Prostate gland (tissue), 2 donors: ENCODE measurements at regions of chr14 and their contacts with region 1.

Region 1: DNA sequence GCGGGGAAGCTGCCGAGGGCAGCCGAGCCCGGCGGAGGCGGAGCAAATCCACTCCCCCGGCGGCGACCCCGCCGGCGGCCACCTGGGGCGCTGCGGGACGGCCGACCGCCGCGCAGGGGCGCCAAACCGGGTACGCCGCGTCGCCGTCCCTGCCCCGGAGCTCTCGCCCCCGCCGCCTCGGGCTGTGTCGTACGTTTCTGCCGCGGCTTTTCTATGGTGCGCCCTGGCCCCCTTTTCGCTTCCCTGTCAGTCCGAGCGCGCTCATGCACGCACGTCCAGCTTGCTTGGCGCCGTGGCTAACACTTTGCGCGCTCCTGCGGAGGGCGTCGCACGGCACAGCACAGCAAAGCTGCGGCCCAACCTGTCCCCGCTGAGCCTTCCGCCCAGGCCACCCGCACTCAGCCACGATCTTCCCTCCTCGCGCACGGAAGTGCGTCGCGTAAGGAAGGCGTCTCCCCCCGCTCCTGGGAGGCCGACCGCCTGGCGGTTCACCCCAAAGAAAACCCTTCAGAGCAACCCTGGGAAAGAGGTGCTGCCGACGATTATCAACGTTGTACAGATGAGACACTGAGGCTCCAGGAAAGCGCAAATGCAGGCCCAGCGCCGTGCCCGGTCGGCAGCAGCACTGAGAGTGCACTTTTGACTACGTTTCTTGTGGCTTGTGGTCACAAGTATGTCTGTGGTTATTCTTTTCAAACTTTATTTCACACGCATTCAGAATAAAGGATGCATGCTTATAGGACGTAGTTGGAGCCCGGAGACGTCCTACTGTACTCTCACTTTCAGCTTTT is at the start of gene HECTD1:
- DNase-seq: peak; percentile 89
- H3K4me3 ChIP-seq: peak within 1 kb of the TSS; percentile 71 to 87
- H3K27ac ChIP-seq: peak within 1 kb of the TSS; percentile 98 to 99
- H3K4me1 ChIP-seq: no peaks in the 10 kb centered on the region
- H3K27me3 ChIP-seq: no peaks in the 10 kb centered on the region
- CTCF ChIP-seq: peak; percentile 65 to 90 (median 79)
- POLR2A ChIP-seq: peak; percentile 45
- total RNA-seq, gene HECTD1: 108 to 189 TPM

Region 2: GRCh38 chr14:31026395-31027118 is 181.4 kb before region 1 on chr14:
- intact Hi-C with region 1: loop called (anchors 2 kb)
- DNase-seq: peak; percentile 97
- H3K4me3 ChIP-seq: peak overlapping the region; percentile 99 to 100
- H3K27ac ChIP-seq: peak overlapping the region; percentile 99
- H3K4me1 ChIP-seq: no peaks in the 10 kb centered on the region
- H3K27me3 ChIP-seq: no peaks in the 10 kb centered on the region
- CTCF ChIP-seq: peak in 2 of 4 experiments; percentile 31 to 39
- POLR2A ChIP-seq: peak; percentile 70

Region 3: DNA sequence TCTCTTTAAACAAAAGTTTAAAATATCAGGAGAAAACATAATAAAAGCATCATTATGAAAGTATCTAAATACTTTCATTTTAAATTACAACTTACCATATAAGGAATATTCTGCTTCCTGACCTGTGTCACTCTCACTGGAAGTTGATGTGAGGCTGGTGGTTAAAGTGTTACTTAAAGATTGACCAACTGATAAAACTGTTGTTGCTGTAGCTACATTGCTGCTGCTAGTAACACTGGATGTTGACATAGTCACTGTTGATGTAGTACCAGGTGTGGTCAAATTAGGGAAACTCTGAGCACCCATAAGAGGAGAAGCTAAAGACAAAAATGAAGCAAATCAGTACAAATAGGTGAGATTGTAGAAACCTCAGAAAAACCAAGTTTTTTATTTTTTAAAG is 80.3 kb before region 1 on chr14:
- intact Hi-C with region 1: no loop called
- DNase-seq: no peak
- H3K4me3 ChIP-seq: no peak overlapping the region
- H3K27ac ChIP-seq: no peak overlapping the region
- H3K4me1 ChIP-seq: no peaks in the 10 kb centered on the region
- H3K27me3 ChIP-seq: no peaks in the 10 kb centered on the region
- CTCF ChIP-seq: no peak
- POLR2A ChIP-seq: no peak

Region 4: DNA sequence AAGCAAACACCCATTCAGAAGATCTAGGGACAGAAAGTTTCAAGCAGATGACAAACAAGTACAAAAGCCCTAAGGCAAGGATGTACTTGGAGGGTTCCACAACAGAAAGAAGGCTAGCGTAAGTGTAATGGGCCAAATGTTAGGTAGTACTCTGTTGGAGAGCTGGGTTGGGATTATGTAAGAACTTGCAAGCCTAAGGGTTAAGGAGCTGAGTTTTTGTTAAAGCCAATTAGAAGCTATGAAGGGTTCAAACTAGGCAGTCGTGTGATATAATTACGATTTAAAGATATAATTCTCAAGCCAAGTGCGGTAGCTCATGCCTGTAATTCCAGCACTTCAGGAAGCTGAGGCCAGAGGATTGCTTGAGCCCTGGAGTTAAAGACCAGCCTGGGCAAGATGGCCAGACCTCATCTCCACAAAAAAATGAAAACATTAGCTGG is 41.7 kb before region 1 on chr14:
- intact Hi-C with region 1: loop called (anchors 5 kb)
- DNase-seq: no peak
- H3K4me3 ChIP-seq: no peak overlapping the region
- H3K27ac ChIP-seq: no peak overlapping the region
- H3K4me1 ChIP-seq: peaks cover 8% of the 10 kb centered on the region
- H3K27me3 ChIP-seq: no peaks in the 10 kb centered on the region
- CTCF ChIP-seq: no peak
- POLR2A ChIP-seq: no peak